Left cardiac atrium (tissue), 4 donors: ENCODE measurements at regions of chr1 and their contacts with region 1.

Region 1: DNA sequence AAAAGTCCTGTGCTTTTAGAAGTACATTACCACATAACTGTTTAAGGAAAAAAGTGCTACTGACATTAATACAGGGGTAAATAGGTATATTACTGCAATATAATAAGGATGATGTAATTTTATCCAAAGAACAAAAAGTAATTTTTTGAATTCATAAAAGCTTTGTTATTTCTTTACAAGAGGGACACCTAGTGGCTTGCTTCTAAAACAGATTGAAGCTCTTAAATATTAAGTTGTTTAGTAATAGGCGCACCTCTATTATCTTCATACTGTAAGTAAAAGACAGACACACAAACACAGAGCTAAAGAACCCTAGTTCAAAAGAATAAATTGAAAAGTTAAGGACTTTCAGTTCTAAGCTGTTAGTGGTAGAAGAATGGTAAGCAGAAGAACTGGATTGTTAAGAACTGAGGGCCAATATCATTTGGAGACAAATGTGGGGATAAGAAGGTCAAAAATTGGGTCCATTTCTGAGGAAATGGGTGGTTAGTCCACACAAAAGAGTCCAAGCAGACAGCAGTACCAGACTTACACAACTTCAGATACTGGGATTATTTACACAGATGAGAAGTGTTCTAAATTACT is 15.4 kb downstream of the ZNHIT6 start:
- DNase-seq: no peak
- ATAC-seq: no peak

Region 2: DNA sequence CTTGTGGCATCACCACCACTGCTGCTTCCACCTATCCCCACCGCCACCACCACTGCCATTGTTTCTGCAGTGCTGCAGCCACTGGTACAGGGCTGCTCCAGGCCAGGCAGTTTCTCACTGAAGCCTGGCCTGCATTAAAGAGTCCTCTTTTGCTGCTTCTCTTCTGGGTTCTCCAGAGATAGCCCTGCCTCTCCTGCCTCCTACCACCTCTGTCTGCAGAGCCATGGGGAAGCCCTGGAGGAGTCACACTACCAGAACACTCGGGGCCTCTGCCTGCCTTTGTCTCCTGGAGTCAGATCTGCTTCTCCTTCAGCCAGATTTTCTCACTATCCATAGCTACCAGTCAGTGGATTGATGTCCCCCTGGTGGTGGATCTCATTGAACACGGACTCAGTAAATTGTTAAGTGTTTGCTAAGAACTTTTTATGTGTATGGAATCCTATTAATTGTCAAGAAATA is 190.2 kb before region 1 on chr1:
- intact Hi-C with region 1: loop called in 1 of 2 experiments (anchors 5 kb)
- DNase-seq: peak; percentile 37
- ATAC-seq: peak; percentile 75 to 93

Region 3: GRCh38 chr1:85580872-85581801 is 111.7 kb before region 1 on chr1:
- intact Hi-C with region 1: loop called in 1 of 2 experiments (anchors 5 kb)
- DNase-seq: peak; percentile 74
- ATAC-seq: peak; percentile 48 to 56

Region 4: GRCh38 chr1:85838238-85838637 is 145.4 kb after region 1 on chr1:
- intact Hi-C with region 1: no loop called
- DNase-seq: no peak
- ATAC-seq: no peak